Prostate gland (tissue), 2 donors: ENCODE measurements at regions of chr17 and their contacts with region 1.

Region 1: DNA sequence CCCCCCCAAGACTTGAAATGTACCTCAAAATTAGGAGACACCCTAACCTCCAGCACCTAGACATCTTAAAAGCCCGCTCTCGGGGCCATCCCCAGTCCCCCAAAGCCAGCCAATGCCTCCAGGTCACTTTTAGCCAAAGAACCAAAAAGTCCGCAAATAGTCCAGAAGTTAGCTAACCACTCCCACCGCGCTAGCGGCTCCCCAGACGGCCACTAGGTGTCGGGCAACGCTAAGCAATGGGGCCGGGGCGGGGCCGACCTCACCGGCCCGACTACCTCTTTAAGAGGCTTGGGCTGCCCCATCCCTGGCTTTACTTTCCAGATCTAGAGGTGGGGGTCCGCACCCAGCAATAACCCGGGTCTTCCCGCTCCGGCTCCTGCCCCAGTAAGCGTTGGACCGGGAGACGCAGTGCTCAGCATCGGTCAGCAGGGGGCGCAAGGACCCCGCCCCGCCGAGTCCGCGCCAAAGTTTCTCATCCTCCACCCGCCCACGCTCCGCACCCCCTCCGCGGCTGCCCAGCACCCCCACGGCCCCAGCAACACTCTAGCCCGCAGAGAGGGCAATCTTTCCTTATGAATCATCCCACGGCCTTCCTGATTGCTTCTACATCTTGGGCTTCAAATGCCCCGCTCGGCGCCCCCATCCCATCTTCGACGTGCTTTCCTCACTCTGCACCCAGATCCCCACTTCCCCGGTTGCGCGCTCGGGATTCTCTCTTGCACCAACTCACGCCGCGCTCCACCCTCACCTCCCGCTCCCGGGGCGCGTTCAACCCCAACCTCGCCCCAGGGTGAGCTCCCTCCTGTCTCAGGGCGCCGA is 765 bp downstream of the COL1A1 start:
- DNase-seq: peak; percentile 89
- H3K4me3 ChIP-seq: peak overlapping the region; percentile 36 to 39
- H3K27ac ChIP-seq: peak overlapping the region; percentile 80 to 85
- H3K4me1 ChIP-seq: no peaks in the 10 kb centered on the region
- H3K27me3 ChIP-seq: no peaks in the 10 kb centered on the region
- CTCF ChIP-seq: peak; percentile 100
- POLR2A ChIP-seq: no peak

Region 2: GRCh38 chr17:50161023-50161910 is 39.4 kb before region 1 on chr17:
- intact Hi-C with region 1: loop called (anchors 2 kb)
- DNase-seq: peak; percentile 90
- H3K4me3 ChIP-seq: peak overlapping the region; percentile 39 to 45
- H3K27ac ChIP-seq: peak overlapping the region; percentile 52 to 75
- H3K4me1 ChIP-seq: no peaks in the 10 kb centered on the region
- H3K27me3 ChIP-seq: no peaks in the 10 kb centered on the region
- CTCF ChIP-seq: peak; percentile 84 to 99 (median 94)
- POLR2A ChIP-seq: peak; percentile 69

Region 3: GRCh38 chr17:50272711-50273653 is 72.3 kb after region 1 on chr17:
- intact Hi-C with region 1: loop called (anchors 1 kb)
- DNase-seq: no peak
- H3K4me3 ChIP-seq: peak overlapping the region; percentile 26 to 35
- H3K27ac ChIP-seq: peak overlapping the region; percentile 49 to 58
- H3K4me1 ChIP-seq: peaks cover 3% of the 10 kb centered on the region
- H3K27me3 ChIP-seq: no peaks in the 10 kb centered on the region
- CTCF ChIP-seq: peak; percentile 91 to 95 (median 93)
- POLR2A ChIP-seq: no peak

Region 4: GRCh38 chr17:50289991-50290702 is 89.5 kb after region 1 on chr17:
- intact Hi-C with region 1: loop called (anchors 5 kb)
- DNase-seq: peak; percentile 88
- H3K4me3 ChIP-seq: no peak overlapping the region
- H3K27ac ChIP-seq: peak overlapping the region; percentile 79 to 84
- H3K4me1 ChIP-seq: no peaks in the 10 kb centered on the region
- H3K27me3 ChIP-seq: no peaks in the 10 kb centered on the region
- CTCF ChIP-seq: peak in 1 of 4 experiments; percentile 10
- POLR2A ChIP-seq: peak; percentile 38